ENCODE measurements at regions of chr17 and their contacts with region 1.

Region 1: GRCh38 chr17:45385331-45385997 is 47.2 kb downstream of the ARHGAP27 start:
- DNase-seq: peak; percentile 91 to 97
- ATAC-seq: peak; percentile 93
- H3K4me3 ChIP-seq: no peak overlapping the region
- H3K27ac ChIP-seq: no peak overlapping the region
- H3K4me1 ChIP-seq: no peaks in the 10 kb centered on the region
- H3K27me3 ChIP-seq: no peaks in the 10 kb centered on the region

Region 2: GRCh38 chr17:45218895-45219661 is 166.4 kb before region 1 on chr17:
- intact Hi-C with region 1: loop called (anchors 2 kb)
- DNase-seq: peak; percentile 87 to 97
- ATAC-seq: peak; percentile 92
- H3K4me3 ChIP-seq: no peak overlapping the region
- H3K27ac ChIP-seq: no peak overlapping the region
- H3K4me1 ChIP-seq: no peaks in the 10 kb centered on the region
- H3K27me3 ChIP-seq: no peaks in the 10 kb centered on the region

Region 3: GRCh38 chr17:45345554-45346215 is 39.8 kb before region 1 on chr17:
- intact Hi-C with region 1: no loop called
- DNase-seq: no peak
- ATAC-seq: peak; percentile 79
- H3K4me3 ChIP-seq: no peak overlapping the region
- H3K27ac ChIP-seq: no peak overlapping the region
- H3K4me1 ChIP-seq: no peaks in the 10 kb centered on the region
- H3K27me3 ChIP-seq: no peaks in the 10 kb centered on the region

Region 4: DNA sequence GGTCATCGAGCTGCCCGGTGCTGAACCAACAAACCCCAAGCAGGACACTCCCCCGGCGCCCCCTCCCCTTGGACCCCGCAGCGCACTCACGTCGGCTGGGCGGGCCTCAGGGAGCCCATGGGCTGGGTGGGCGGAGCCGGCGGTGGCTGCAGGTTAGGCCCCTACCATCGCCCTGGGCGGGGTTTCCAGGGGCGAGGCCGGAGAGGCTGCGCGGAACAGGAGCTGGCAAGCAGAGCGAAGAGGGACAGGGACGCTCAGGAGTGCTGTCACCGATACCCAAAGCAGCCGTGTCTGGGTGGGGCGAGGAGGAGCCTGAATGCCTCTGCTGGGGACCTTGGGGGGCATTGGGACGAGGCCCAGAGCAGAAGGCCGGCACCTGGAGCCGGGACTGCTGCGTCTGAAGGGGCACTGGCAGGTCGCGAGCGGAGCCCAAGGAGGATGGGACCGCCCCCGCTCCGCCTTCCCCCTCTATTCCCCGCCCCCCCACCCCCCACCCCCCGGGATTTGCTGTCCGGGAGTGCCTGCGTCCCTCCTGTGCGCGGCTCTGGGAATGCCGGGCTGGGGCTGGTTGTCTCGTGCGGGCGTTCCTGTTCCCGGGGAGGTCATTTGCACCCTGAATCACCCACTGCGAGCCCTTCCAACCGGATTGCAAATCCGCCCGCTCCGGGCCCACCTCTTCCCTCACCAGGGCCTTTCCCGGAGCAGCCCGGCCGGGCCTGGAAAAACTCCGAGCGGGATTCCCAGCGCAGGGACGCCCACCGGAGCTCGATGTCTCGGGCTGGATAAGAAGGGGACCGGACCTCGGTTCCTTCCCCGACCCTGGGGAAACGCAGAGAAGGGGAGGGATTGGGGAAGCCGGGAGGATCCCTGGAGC is 46.3 kb after region 1 on chr17:
- intact Hi-C with region 1: loop called in 1 of 2 experiments (anchors 10 kb)
- DNase-seq: peak; percentile 75 to 87
- ATAC-seq: peak; percentile 44
- H3K4me3 ChIP-seq: peak overlapping the region in 1 of 2 donors; percentile 20
- H3K27ac ChIP-seq: no peak overlapping the region
- H3K4me1 ChIP-seq: no peaks in the 10 kb centered on the region
- H3K27me3 ChIP-seq: no peaks in the 10 kb centered on the region

Measured in aorta (tissue), 5 donors.